MCF 10A (cell line): ENCODE measurements at regions of chr14 and their contacts with region 1.

Region 1: DNA sequence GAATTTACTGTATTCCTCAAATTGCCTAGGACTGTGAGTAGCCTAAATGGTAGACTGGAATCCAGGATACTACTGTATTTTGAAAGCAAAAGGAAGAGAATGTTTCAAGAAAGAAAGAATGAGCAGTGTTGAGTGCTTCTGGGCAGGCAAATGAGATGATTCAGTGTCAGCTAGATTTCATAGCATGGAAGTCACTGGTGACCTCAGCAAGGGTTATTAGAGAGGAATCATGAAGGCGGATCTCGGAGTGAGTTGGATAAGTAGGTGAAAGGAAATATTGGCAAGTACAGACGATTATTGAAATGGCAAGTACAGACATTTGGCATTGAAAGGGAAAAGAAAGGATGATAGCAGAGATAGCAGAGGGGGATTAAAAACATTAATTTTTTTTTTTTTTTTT is 27.1 kb downstream of the VRK1 start:
- DNase-seq: peak; percentile 24
- H3K4me3 Mint-ChIP-seq: peak overlapping the region; percentile 2
- H3K27ac Mint-ChIP-seq: peak overlapping the region; percentile 7
- H3K4me1 Mint-ChIP-seq: peaks cover 45% of the 10 kb centered on the region
- H3K27me3 Mint-ChIP-seq: no peaks in the 10 kb centered on the region
- CTCF ChIP-seq: no peak

Region 2: DNA sequence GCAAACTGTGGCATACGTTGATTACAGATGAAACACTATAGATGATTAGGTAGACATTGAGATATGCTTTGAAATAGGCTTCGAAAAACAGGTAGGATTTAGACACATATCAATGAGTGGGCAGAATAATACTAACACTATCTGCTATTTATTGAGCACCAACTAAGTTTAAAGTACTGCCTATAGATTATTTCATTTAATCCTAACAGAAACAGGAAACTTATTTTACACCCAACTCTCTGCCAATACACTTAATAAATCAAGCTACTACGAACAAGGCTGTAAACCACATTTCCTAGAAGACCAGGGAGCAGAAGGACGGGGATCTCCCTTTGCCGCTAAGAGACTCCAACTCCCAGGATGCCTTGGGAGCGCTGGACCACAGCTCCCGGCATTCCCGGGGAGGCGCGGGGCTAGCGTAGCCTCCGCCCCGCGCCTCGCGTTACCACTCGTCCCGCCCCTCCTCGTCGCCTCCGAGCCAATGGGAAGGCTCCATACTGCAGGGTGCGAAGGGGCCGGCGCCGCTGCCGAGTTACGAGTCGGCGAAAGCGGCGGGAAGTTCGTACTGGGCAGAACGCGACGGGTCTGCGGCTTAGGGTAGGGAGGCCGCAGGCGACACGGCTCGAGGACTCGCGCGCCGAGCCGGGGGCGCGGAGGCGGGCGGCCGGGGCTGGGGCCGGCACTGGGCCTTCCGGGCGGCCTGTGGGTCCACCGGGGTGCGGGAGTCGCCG is 27.3 kb before region 1 on chr14 and contains the start of gene VRK1:
- CTCF ChIA-PET with region 1: no interaction called
- POLR2A ChIA-PET with region 1: interaction called, 19 read pairs
- intact Hi-C with region 1: loop called (anchors 2 kb)
- DNase-seq: peak; percentile 97
- H3K4me3 Mint-ChIP-seq: peak within 1 kb of the TSS; percentile 85
- H3K27ac Mint-ChIP-seq: peak within 1 kb of the TSS; percentile 85
- H3K4me1 Mint-ChIP-seq: peaks cover 23% of the 10 kb centered on the region
- H3K27me3 Mint-ChIP-seq: no peaks in the 10 kb centered on the region
- CTCF ChIP-seq: no peak
- total RNA-seq, gene VRK1: 14.7 and 17.7 TPM in 2 replicates

Region 3: GRCh38 chr14:96811985-96812667 is 12.2 kb before region 1 on chr14:
- CTCF ChIA-PET with region 1: interaction called, 12 read pairs
- POLR2A ChIA-PET with region 1: interaction called, 15 read pairs
- intact Hi-C with region 1: no loop called
- DNase-seq: no peak
- H3K4me3 Mint-ChIP-seq: no peak overlapping the region
- H3K27ac Mint-ChIP-seq: peak overlapping the region; percentile 64
- H3K4me1 Mint-ChIP-seq: peaks cover 28% of the 10 kb centered on the region
- H3K27me3 Mint-ChIP-seq: no peaks in the 10 kb centered on the region
- CTCF ChIP-seq: no peak

Region 4: GRCh38 chr14:97218691-97219430 is 394.6 kb after region 1 on chr14:
- CTCF ChIA-PET with region 1: no interaction called
- POLR2A ChIA-PET with region 1: no interaction called
- intact Hi-C with region 1: no loop called
- DNase-seq: no peak
- H3K4me3 Mint-ChIP-seq: no peak overlapping the region
- H3K27ac Mint-ChIP-seq: no peak overlapping the region
- H3K4me1 Mint-ChIP-seq: no peaks in the 10 kb centered on the region
- H3K27me3 Mint-ChIP-seq: peaks cover 85% of the 10 kb centered on the region
- CTCF ChIP-seq: no peak